ENCODE measurements at regions of chr11 and their contacts with region 1.

Region 1: DNA sequence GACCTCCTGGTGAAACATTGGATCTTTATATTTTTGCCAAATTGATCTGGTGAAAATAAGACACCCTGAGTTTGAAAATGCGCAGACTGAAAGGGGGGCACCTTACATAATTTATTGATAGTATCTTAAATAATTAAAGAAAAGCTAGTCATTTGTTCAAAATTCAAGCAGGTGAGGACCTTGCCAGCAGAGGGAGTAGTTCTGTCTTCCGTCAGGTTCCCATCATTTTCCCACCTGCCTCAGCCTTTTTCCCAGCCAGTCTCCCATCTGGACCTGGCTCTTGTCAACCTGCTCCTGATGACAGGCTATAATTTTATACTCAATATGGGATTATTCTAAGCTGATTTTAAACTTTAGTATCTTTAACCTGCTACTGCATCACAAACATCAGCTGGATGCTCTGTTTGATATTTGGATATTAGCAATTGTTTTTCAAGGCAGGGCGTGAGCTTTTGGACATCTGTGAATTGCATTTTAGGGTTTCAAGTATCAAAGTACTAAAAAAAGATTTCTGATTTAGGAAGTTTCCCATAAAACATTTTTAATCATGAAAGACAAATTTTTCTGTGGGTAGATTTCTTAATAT is 132.0 kb downstream of the ELP4 start:
- DNase-seq: peak; percentile 61
- H3K4me3 Mint-ChIP-seq: no peak overlapping the region
- H3K27ac Mint-ChIP-seq: no peak overlapping the region
- H3K4me1 Mint-ChIP-seq: peaks cover 11% of the 10 kb centered on the region
- H3K27me3 Mint-ChIP-seq: no peaks in the 10 kb centered on the region
- CTCF ChIP-seq: peak; percentile 76

Region 2: DNA sequence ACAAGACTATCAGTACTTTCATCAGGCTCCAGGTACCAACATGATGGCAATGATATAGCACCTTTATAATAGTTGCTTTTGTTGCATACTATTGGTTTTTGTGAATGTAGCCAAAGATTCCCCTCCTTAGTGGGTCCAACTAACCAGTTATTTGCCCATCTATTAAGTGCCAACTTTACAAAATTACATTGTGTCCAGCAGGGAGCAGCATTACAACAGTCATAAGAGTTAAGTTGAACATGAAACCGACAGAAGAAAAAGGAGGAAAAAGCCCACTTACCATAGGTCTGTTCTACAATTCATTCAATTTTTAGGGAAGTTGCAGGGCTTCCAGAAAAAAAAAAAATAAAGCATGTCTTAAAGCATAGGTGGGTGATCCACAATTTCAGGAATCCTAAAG is 153.7 kb before region 1 on chr11:
- CTCF ChIA-PET with region 1: interaction called, 4 read pairs
- POLR2A ChIA-PET with region 1: no interaction called
- intact Hi-C with region 1: loop called (anchors 5 kb)
- DNase-seq: peak; percentile 52
- H3K4me3 Mint-ChIP-seq: no peak overlapping the region
- H3K27ac Mint-ChIP-seq: no peak overlapping the region
- H3K4me1 Mint-ChIP-seq: peaks cover 11% of the 10 kb centered on the region
- H3K27me3 Mint-ChIP-seq: no peaks in the 10 kb centered on the region
- CTCF ChIP-seq: peak; percentile 43

Region 3: GRCh38 chr11:31655483-31655882 is 13.9 kb after region 1 on chr11:
- CTCF ChIA-PET with region 1: interaction called, 14 read pairs
- POLR2A ChIA-PET with region 1: interaction called, 17 read pairs
- intact Hi-C with region 1: no loop called
- DNase-seq: peak; percentile 79
- H3K4me3 Mint-ChIP-seq: no peak overlapping the region
- H3K27ac Mint-ChIP-seq: peak overlapping the region; percentile 29
- H3K4me1 Mint-ChIP-seq: peaks cover 15% of the 10 kb centered on the region
- H3K27me3 Mint-ChIP-seq: no peaks in the 10 kb centered on the region
- CTCF ChIP-seq: no peak

Region 4: DNA sequence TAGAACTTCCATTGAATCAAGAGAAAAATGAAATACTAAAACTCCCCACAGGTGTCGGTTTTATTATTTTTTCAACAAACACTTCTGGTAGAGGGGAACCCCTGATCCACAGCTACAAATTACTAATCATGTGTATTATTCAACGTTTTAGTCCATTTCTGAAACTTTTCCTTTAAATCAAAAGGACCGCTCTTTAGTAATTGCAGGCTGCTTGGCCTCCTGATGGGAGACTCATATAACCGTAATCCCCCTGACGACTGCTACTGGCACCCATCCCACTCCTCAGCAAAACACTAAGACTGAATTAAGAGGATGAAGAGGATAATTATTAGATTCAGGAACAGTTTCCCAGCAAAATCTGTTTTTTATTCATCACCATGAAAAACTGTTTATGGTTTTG is 123.2 kb after region 1 on chr11:
- CTCF ChIA-PET with region 1: interaction called, 3 read pairs
- POLR2A ChIA-PET with region 1: no interaction called
- intact Hi-C with region 1: loop called (anchors 10 kb)
- DNase-seq: no peak
- H3K4me3 Mint-ChIP-seq: no peak overlapping the region
- H3K27ac Mint-ChIP-seq: no peak overlapping the region
- H3K4me1 Mint-ChIP-seq: no peaks in the 10 kb centered on the region
- H3K27me3 Mint-ChIP-seq: no peaks in the 10 kb centered on the region
- CTCF ChIP-seq: no peak

Region 5: DNA sequence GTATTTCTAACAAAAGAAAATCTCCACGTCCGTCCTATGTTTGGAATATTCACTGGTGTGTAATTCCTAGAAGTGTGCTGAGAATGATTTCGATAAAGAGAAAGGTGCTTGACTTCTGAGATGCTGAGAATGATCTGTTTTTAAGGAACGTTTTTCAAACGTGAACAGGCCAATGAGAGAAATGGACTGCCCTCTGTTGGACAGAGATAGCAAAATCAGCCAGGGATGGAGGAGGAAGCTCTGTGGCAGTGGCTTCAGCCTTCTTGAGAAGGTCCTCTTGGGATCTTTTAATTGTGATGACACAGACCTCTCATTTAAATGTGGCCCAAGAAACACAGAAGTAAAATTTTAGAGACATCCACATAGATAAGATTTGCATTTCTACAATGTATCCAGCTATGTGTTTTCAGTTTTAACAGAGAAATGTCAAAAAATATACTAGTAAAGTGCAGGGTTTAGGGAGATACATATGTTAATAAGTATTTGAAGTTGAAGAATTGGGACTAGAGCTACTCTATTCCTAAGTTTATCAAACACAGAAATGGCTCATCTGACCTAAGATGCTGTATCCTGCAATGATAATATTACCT is 365.3 kb after region 1 on chr11:
- CTCF ChIA-PET with region 1: interaction called, 21 read pairs
- POLR2A ChIA-PET with region 1: interaction called, 3 read pairs
- intact Hi-C with region 1: loop called (anchors 1 kb)
- DNase-seq: peak; percentile 53
- H3K4me3 Mint-ChIP-seq: no peak overlapping the region
- H3K27ac Mint-ChIP-seq: no peak overlapping the region
- H3K4me1 Mint-ChIP-seq: no peaks in the 10 kb centered on the region
- H3K27me3 Mint-ChIP-seq: peaks cover 41% of the 10 kb centered on the region
- CTCF ChIP-seq: peak; percentile 60